Activated CD8-positive, alpha-beta T cell treated with anti-CD3 and anti-CD28 coated beads, Interleukin-2, amount 10 ng/mL, durations not matched to agents 7 days and 5 days (primary cell): ENCODE measurements at regions of chr21 and their contacts with region 1.

Region 1: DNA sequence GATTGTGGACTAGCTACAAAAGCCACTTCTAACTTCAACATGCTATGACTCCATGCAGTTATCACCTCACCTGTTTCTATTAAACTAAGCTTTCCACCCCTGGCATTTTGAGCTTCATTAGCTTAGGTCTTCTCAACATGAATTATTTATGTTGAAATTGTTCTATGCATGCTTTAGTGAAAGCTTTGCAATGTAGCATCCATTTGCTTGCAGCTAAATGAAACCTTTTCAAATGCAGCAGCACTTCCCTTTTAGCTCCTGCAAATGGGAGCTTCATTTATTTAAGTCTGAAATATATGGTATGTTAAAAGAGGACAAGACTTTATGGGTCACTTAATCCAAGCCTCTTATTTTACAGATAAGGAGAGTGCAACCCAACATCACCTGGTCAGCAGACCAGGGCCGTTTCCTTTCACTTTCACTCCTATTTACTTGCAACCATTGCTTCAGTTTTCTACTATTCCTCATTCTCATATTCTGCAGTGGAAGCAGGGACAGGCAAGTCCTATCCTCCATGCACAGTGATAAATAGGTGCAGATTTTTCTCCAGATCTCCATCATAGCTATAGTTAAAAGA is 56.4 kb upstream of the SAMSN1 start:
- DNase-seq: no peak
- ATAC-seq: peak; percentile 70
- H3K4me3 Mint-ChIP-seq: peak overlapping the region; percentile 63
- H3K27ac Mint-ChIP-seq: peak overlapping the region; percentile 80
- H3K4me1 Mint-ChIP-seq: peaks cover 42% of the 10 kb centered on the region
- H3K27me3 Mint-ChIP-seq: no peaks in the 10 kb centered on the region

Region 2: DNA sequence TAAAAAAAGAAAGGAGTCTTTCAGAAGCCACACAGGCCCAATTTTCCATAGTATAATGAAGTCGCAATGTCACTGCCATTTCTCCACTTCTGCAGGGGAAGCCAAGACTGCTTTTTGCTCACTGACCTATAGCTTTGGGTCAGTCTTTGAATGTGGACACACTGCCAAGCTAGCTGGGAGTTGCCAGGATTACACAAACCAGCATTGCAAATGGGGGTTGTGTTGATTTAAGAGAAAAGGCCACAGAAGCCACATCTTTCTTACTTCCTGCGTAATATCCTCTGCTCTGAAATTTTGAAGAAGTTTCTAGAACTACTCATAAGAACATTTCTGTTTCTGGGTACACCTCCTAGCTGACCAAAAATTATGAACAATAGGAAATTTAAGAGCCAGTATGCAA is 10.6 kb before region 1 on chr21:
- CTCF ChIA-PET with region 1: interaction called, 19 read pairs
- POLR2A ChIA-PET with region 1: interaction called, 10 read pairs
- DNase-seq: peak; percentile 40
- ATAC-seq: peak; percentile 55
- H3K4me3 Mint-ChIP-seq: no peak overlapping the region
- H3K27ac Mint-ChIP-seq: peak overlapping the region; percentile 61
- H3K4me1 Mint-ChIP-seq: peaks cover 32% of the 10 kb centered on the region
- H3K27me3 Mint-ChIP-seq: no peaks in the 10 kb centered on the region